Activated CD8-positive, alpha-beta T cell treated with anti-CD3 and anti-CD28 coated beads for 36 hours (primary cell): ENCODE measurements at regions of chr4 and their contacts with region 1.

Region 1: DNA sequence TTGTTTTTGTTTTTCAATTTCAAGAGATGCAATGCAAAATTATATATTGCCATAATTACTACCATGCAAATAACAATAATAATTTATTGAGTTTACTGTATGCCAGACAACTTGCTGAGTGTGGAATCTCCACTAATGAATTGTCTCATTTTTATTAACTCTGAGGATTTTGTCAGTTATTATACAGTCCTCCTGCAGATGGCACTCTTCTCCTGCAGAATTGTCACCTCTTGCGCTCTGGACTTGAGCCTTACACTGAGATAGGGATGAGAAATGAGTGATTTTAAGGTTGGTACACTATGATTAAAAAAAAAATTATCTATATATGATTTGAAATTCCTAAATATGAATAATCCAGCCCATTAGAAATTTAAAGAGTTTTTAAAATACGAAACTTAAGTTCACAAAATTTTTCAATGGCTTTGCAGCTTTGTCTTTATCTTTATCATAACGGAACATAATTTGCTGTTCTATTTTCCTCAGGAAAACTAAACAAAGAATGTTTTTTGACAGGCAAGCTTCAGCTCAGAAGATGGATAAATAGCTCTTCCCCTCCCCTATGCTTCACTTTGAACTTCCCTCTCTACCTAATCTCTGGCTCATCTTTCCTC is 12.7 kb upstream of the PAQR3 start:
- DNase-seq: peak; percentile 26
- ATAC-seq: peak; percentile 67
- H3K4me3 Mint-ChIP-seq: no peak overlapping the region
- H3K27ac Mint-ChIP-seq: no peak overlapping the region
- H3K4me1 Mint-ChIP-seq: no peaks in the 10 kb centered on the region
- H3K27me3 Mint-ChIP-seq: peaks cover 11% of the 10 kb centered on the region
- CTCF ChIP-seq: peak; percentile 81

Region 2: GRCh38 chr4:78938868-78939666 is 12.9 kb before region 1 on chr4 and contains the start of gene PAQR3:
- CTCF ChIA-PET with region 1: interaction called, 13 read pairs
- POLR2A ChIA-PET with region 1: no interaction called
- intact Hi-C with region 1: no loop called
- DNase-seq: peak; percentile 85
- ATAC-seq: peak; percentile 98
- H3K4me3 Mint-ChIP-seq: peak within 1 kb of the TSS; percentile 97
- H3K27ac Mint-ChIP-seq: peak within 1 kb of the TSS; percentile 87
- H3K4me1 Mint-ChIP-seq: peaks cover 37% of the 10 kb centered on the region
- H3K27me3 Mint-ChIP-seq: peaks cover 3% of the 10 kb centered on the region
- CTCF ChIP-seq: no peak
- total RNA-seq, gene PAQR3: 10.2 to 11.4 TPM

Region 3: GRCh38 chr4:79042079-79042674 is 90.2 kb after region 1 on chr4:
- CTCF ChIA-PET with region 1: no interaction called
- POLR2A ChIA-PET with region 1: no interaction called
- intact Hi-C with region 1: no loop called
- DNase-seq: no peak
- ATAC-seq: no peak
- H3K4me3 Mint-ChIP-seq: no peak overlapping the region
- H3K27ac Mint-ChIP-seq: no peak overlapping the region
- H3K4me1 Mint-ChIP-seq: no peaks in the 10 kb centered on the region
- H3K27me3 Mint-ChIP-seq: no peaks in the 10 kb centered on the region
- CTCF ChIP-seq: no peak

Region 4: GRCh38 chr4:79576429-79576753 is 624.4 kb after region 1 on chr4:
- CTCF ChIA-PET with region 1: interaction called, 7 read pairs
- POLR2A ChIA-PET with region 1: no interaction called
- intact Hi-C with region 1: loop called (anchors 5 kb)
- DNase-seq: peak; percentile 20
- ATAC-seq: peak; percentile 56
- H3K4me3 Mint-ChIP-seq: no peak overlapping the region
- H3K27ac Mint-ChIP-seq: no peak overlapping the region
- H3K4me1 Mint-ChIP-seq: no peaks in the 10 kb centered on the region
- H3K27me3 Mint-ChIP-seq: peaks cover 2% of the 10 kb centered on the region
- CTCF ChIP-seq: peak; percentile 37

Region 5: DNA sequence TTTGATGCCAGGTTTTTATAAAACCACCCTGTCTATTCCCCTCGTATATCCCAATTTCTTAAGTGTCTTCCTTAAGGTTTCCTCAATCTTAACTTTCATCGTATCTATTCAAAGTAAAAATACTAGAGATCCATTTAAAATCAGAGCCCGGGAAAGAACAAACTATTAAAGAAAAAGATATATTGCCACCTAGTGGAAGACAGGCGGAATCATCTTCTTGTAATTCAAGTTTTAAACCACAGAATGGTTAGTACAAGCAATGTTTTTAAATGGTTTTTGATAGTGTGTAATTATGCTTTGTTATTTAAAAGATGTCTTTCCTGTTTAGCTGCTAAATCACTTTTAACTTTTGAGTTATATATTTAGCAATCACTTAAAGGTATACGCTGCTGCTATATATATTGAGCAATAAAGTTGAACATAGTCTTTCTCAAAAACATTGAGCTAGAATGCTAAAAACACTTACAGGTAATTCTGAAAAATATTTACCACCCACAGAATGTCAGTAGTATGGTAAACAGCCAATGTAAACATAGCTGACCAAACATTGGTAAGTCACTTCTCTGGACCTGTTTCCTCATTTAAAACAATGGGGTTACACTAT is 1263.6 kb after region 1 on chr4:
- CTCF ChIA-PET with region 1: interaction called, 13 read pairs
- POLR2A ChIA-PET with region 1: no interaction called
- intact Hi-C with region 1: loop called (anchors 5 kb)
- DNase-seq: no peak
- ATAC-seq: no peak
- H3K4me3 Mint-ChIP-seq: no peak overlapping the region
- H3K27ac Mint-ChIP-seq: no peak overlapping the region
- H3K4me1 Mint-ChIP-seq: no peaks in the 10 kb centered on the region
- H3K27me3 Mint-ChIP-seq: peaks cover 22% of the 10 kb centered on the region
- CTCF ChIP-seq: peak; percentile 85

Region 6: DNA sequence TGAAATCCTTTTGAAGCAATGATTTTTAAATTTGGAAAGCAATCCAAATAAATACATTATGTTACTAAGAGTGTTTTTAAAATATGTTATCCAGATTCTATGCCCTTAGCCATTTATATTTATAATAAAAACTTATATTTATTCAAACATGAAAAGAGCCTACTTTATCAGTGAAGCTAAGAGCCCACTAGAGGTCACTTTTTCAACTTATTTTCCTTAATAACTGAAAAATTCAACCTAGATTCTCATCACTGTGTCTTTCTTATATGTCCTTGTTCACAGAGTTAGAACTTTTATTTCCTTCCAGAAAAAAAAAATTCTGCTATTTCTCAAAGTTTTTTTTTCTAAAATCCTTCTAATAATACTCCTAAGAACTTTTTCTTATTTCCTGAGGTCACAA is 1269.2 kb after region 1 on chr4:
- CTCF ChIA-PET with region 1: interaction called, 11 read pairs
- POLR2A ChIA-PET with region 1: no interaction called
- intact Hi-C with region 1: no loop called
- DNase-seq: no peak
- ATAC-seq: no peak
- H3K4me3 Mint-ChIP-seq: no peak overlapping the region
- H3K27ac Mint-ChIP-seq: no peak overlapping the region
- H3K4me1 Mint-ChIP-seq: no peaks in the 10 kb centered on the region
- H3K27me3 Mint-ChIP-seq: peaks cover 25% of the 10 kb centered on the region
- CTCF ChIP-seq: peak; percentile 25